Colonic mucosa (tissue), 4 donors: ENCODE measurements at regions of chr6 and their contacts with region 1.

Region 1: GRCh38 chr6:32244946-32245398 is 21.1 kb upstream of the NOTCH4 start:
- DNase-seq: peak; percentile 76
- H3K4me3 ChIP-seq: no peak overlapping the region
- H3K27ac ChIP-seq: no peak overlapping the region
- H3K4me1 ChIP-seq: no peaks in the 10 kb centered on the region
- H3K27me3 ChIP-seq: no peaks in the 10 kb centered on the region
- CTCF ChIP-seq: peak; percentile 85

Region 2: GRCh38 chr6:32081168-32081990 is 163.6 kb before region 1 on chr6:
- intact Hi-C with region 1: no loop called
- DNase-seq: no peak
- H3K4me3 ChIP-seq: no peak overlapping the region
- H3K27ac ChIP-seq: no peak overlapping the region
- H3K4me1 ChIP-seq: no peaks in the 10 kb centered on the region
- H3K27me3 ChIP-seq: no peaks in the 10 kb centered on the region
- CTCF ChIP-seq: no peak

Region 3: GRCh38 chr6:32118782-32119628 is 126.0 kb before region 1 on chr6:
- intact Hi-C with region 1: loop called (anchors 5 kb)
- DNase-seq: peak; percentile 88
- H3K4me3 ChIP-seq: no peak overlapping the region
- H3K27ac ChIP-seq: peak overlapping the region; percentile 70
- H3K4me1 ChIP-seq: peaks cover 4% of the 10 kb centered on the region
- H3K27me3 ChIP-seq: no peaks in the 10 kb centered on the region
- CTCF ChIP-seq: peak; percentile 86

Region 4: DNA sequence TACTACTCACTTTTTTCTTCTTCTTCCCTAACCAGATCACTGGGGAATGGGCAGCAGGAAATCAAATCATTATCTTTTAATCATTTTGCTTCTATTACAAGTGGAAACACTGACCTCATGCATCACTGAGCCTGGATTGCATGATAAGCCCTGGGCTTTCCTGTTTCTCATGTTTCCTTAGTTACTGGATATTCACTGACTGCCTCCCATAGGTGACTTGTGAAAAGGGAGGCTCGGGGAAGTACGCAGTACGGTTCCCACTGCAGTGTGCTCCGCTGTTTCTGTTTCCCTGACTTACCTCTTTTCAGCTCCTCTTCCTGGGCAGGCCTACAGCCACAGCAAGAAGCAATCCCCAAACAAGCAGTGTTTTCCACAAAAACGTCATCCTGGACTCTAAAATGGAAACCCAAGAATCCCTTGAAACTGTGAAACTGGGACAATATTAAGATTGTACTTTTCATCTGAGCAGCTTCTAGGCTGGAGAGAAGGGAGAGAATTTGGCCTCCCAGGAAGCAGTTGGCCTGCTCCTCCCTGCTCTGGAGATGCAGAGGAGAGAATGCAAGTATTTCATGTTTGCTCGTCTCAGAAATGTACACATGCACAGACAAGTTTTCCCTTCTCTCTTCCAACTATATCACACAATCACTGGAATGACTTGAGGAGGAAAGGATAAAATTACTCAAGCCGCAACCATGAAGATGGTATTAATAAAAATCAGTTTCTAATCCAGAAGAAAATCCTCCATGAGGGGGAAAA is 148.9 kb after region 1 on chr6:
- intact Hi-C with region 1: loop called (anchors 10 kb)
- DNase-seq: no peak
- H3K4me3 ChIP-seq: no peak overlapping the region
- H3K27ac ChIP-seq: no peak overlapping the region
- H3K4me1 ChIP-seq: no peaks in the 10 kb centered on the region
- H3K27me3 ChIP-seq: no peaks in the 10 kb centered on the region
- CTCF ChIP-seq: no peak

Region 5: DNA sequence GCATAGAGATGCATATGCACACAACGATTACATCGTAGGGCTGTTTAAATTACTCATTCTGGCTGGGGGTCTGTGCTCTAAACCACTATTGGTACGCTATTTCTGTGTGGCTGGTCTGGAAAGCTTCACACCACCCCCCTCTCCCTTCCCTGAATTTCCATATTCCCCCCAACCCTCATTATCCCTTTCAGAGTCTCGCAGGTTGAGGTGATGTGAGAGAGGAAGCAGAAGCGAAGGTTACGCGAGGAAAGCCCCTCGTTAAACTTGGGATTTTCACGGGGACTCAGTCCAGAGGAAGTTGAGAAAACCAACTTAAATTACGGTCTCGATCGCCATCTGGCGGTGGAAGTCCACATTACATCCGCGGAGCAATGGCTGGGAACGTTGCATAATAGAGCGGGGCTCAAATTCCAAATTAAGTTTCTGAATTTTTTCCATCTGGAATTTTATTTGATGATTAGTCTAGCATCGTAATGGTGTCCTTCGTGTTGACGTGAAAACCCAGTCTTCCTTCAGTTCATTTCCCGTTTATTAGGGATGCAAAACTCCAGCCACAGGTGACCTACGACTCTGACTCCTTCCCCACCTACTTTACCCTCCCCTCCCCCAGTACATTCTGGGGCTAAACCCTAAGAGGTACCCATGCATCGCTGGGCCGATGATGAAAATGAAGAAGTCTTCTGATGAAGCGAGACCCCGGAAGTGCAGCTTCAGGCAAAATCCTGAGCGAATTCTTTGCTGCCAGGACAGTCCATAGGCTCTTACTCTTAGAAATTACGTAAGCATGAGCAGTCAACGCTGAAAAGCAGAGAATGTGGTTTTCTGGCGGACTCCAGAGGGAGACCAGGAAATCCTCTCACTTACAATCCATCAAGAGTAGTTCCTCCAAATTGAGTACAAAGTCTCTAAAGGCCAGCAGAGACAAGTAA is 552.1 kb after region 1 on chr6:
- intact Hi-C with region 1: loop called (anchors 10 kb)
- DNase-seq: peak; percentile 81
- H3K4me3 ChIP-seq: no peak overlapping the region
- H3K27ac ChIP-seq: no peak overlapping the region
- H3K4me1 ChIP-seq: no peaks in the 10 kb centered on the region
- H3K27me3 ChIP-seq: peaks cover 3% of the 10 kb centered on the region
- CTCF ChIP-seq: peak; percentile 90